WTC11 (cell line): ENCODE measurements at regions of chr6 and their contacts with region 1.

Region 1: GRCh38 chr6:37051138-37052026 is 45.9 kb downstream of the FGD2 start:
- DNase-seq: peak; percentile 94
- ATAC-seq: peak; percentile 38
- H3K4me3 Mint-ChIP-seq: peak overlapping the region; percentile 25
- H3K27ac Mint-ChIP-seq: peak overlapping the region; percentile 82
- H3K4me1 Mint-ChIP-seq: peaks cover 37% of the 10 kb centered on the region
- H3K27me3 Mint-ChIP-seq: no peaks in the 10 kb centered on the region
- CTCF ChIP-seq: peak; percentile 71

Region 2: DNA sequence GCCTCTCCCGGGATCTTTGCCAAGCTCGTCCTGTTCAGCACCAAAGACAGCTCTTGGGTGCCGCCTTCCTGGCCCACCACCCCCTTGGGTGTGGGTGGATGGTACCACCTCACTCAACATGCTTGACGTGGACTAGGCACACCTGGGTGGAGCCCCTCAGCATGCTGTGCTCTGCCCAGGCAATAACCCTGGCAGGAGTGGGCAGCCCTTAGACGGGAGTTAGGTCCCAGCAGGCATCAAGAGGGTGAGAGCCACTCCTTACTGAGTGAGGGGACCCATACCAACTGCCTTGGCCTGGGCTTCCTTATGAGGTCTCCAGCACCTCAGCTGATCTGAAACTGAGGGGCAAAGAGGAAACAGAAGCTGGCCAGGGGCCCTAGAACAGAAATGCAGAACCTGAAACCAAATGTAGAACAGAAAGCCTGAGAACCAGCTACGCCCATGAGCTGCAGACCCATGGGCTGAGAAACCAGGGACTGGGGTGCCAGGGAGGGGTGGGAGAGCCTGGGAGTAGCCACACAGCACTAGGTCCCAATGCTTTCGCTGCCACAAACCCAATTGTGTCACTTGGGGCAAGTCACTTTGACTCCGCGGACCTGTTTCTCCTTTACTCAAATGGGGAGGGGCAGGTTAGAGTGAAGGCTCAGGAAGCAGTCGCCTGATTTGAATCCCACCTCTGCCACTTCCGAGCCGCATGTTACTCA is 43.9 kb before region 1 on chr6:
- CTCF ChIA-PET with region 1: no interaction called
- POLR2A ChIA-PET with region 1: no interaction called
- DNase-seq: no peak
- ATAC-seq: no peak
- H3K4me3 Mint-ChIP-seq: no peak overlapping the region
- H3K27ac Mint-ChIP-seq: no peak overlapping the region; the same call in 1 of the 2 replicates
- H3K4me1 Mint-ChIP-seq: no peaks in the 10 kb centered on the region
- H3K27me3 Mint-ChIP-seq: no peaks in the 10 kb centered on the region
- CTCF ChIP-seq: no peak

Region 3: GRCh38 chr6:37029249-37029971 is 22.0 kb before region 1 on chr6:
- CTCF ChIA-PET with region 1: interaction called, 20 read pairs
- POLR2A ChIA-PET with region 1: no interaction called
- DNase-seq: peak; percentile 73
- ATAC-seq: peak; percentile 86
- H3K4me3 Mint-ChIP-seq: no peak overlapping the region
- H3K27ac Mint-ChIP-seq: no peak overlapping the region
- H3K4me1 Mint-ChIP-seq: no peaks in the 10 kb centered on the region
- H3K27me3 Mint-ChIP-seq: no peaks in the 10 kb centered on the region
- CTCF ChIP-seq: peak; percentile 75

Region 4: DNA sequence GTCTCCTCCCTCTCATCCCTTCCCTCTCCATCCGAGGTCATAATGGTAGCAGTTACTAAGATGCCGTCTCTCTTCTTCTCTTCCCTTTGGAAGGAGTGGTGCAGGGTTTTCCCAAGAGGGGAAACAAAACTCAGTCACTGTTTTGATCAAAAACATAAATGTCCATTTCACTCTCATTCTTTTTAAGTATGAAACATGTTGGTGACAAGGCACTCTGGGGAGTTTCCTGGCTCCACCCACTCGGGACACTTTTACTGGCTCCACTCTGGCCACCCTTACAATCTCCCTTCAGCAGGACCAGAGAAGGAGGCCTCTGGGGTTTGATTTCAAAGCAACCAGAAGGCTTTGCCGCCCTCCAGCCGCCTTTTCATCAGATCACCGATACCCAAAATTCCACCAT is 11.0 kb after region 1 on chr6:
- CTCF ChIA-PET with region 1: no interaction called
- POLR2A ChIA-PET with region 1: no interaction called
- DNase-seq: no peak
- ATAC-seq: no peak
- H3K4me3 Mint-ChIP-seq: no peak overlapping the region
- H3K27ac Mint-ChIP-seq: peak overlapping the region; percentile 90
- H3K4me1 Mint-ChIP-seq: peaks cover 27% of the 10 kb centered on the region
- H3K27me3 Mint-ChIP-seq: no peaks in the 10 kb centered on the region
- CTCF ChIP-seq: no peak

Region 5: DNA sequence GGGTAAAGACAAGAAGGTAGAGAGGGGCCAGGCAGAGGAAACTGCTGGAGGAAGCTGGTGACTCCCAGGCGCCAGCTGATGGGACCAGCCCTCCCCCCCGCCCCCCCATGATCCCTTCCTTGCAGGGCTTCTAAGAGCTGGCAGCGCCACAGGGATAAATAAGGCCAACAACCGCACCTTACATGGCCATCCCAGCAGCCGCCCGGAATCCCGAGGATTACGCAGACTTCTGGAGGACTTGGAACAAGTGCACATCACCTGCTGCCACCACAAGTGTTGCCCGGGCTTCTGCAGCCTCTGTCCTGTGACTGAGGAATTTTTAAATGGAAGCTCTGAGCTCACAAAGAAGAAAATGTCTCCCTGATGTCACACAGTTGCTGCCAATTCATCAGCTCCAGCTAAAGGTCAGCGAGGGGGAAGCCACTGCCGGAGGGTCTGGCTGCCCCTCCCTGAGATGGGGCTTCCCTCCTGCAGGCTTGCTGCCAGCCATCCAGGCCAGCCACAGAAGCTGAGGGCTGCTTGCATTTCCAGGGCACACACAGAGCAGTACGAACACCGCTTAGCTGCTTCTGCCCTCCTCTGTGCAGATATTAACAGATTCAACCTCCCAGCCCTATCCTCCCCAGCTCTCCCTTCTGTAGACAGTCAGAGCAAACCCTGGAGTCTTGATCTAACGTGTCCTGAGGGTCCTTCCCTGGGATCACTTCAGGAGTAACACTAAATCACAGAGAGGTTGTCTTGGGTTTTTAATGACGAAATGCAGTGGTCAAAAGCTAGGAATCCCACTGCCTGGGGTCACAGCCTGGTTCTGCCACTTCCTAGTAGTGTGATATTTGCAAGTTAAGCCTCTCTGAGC is 80.0 kb after region 1 on chr6:
- CTCF ChIA-PET with region 1: interaction called, 11 read pairs
- POLR2A ChIA-PET with region 1: interaction called, 8 read pairs
- DNase-seq: no peak
- ATAC-seq: peak; percentile 17
- H3K4me3 Mint-ChIP-seq: no peak overlapping the region; the same call in 1 of the 2 replicates
- H3K27ac Mint-ChIP-seq: peak overlapping the region; percentile 91
- H3K4me1 Mint-ChIP-seq: peaks cover 83% of the 10 kb centered on the region
- H3K27me3 Mint-ChIP-seq: no peaks in the 10 kb centered on the region
- CTCF ChIP-seq: no peak

Region 6: DNA sequence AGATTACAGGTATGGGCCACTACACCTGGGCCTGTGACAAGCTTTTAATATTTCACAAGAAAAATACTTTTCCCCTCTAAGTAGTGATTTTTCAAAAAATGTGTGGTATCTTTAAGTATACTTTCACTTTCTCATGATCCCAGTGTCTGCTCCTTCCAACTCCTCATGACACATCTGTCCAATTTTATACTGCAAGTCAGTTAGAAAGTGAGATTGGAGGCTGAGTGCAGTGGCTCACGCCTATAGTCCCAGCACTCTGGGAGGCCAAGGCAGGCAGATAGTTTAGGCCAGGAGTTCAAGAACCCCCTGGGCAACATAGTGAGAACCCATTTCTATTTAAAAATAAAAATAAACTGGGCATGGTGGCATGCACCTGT is 138.8 kb after region 1 on chr6:
- CTCF ChIA-PET with region 1: interaction called, 13 read pairs
- POLR2A ChIA-PET with region 1: no interaction called
- DNase-seq: no peak
- ATAC-seq: no peak
- H3K4me3 Mint-ChIP-seq: no peak overlapping the region
- H3K27ac Mint-ChIP-seq: no peak overlapping the region
- H3K4me1 Mint-ChIP-seq: peaks cover 4% of the 10 kb centered on the region; the same call in 1 of the 2 replicates
- H3K27me3 Mint-ChIP-seq: no peaks in the 10 kb centered on the region
- CTCF ChIP-seq: no peak